Activated CD4-positive, alpha-beta T cell treated with anti-CD3 and anti-CD28 coated beads, Interleukin-2, amount 10 ng/mL, durations not matched to agents 7 days and 5 days (primary cell): ENCODE measurements at regions of chrX and their contacts with region 1.

Region 1: GRCh38 chrX:12814420-12814819 is 23.2 kb downstream of the PRPS2 start:
- DNase-seq: peak; percentile 63
- H3K4me3 Mint-ChIP-seq: no peak overlapping the region
- H3K27ac Mint-ChIP-seq: peak overlapping the region; percentile 71
- H3K4me1 Mint-ChIP-seq: peaks cover 42% of the 10 kb centered on the region
- H3K27me3 Mint-ChIP-seq: no peaks in the 10 kb centered on the region

Region 2: GRCh38 chrX:12709047-12709446 is 105.4 kb before region 1 on chrX:
- CTCF ChIA-PET with region 1: no interaction called
- POLR2A ChIA-PET with region 1: no interaction called
- DNase-seq: no peak
- H3K4me3 Mint-ChIP-seq: no peak overlapping the region
- H3K27ac Mint-ChIP-seq: no peak overlapping the region
- H3K4me1 Mint-ChIP-seq: no peaks in the 10 kb centered on the region
- H3K27me3 Mint-ChIP-seq: no peaks in the 10 kb centered on the region

Region 3: GRCh38 chrX:12887767-12888166 is 73.3 kb after region 1 on chrX:
- CTCF ChIA-PET with region 1: interaction called, 17 read pairs
- POLR2A ChIA-PET with region 1: no interaction called
- DNase-seq: no peak
- H3K4me3 Mint-ChIP-seq: no peak overlapping the region
- H3K27ac Mint-ChIP-seq: peak overlapping the region; percentile 50
- H3K4me1 Mint-ChIP-seq: peaks cover 44% of the 10 kb centered on the region
- H3K27me3 Mint-ChIP-seq: peaks cover 5% of the 10 kb centered on the region

Region 4: DNA sequence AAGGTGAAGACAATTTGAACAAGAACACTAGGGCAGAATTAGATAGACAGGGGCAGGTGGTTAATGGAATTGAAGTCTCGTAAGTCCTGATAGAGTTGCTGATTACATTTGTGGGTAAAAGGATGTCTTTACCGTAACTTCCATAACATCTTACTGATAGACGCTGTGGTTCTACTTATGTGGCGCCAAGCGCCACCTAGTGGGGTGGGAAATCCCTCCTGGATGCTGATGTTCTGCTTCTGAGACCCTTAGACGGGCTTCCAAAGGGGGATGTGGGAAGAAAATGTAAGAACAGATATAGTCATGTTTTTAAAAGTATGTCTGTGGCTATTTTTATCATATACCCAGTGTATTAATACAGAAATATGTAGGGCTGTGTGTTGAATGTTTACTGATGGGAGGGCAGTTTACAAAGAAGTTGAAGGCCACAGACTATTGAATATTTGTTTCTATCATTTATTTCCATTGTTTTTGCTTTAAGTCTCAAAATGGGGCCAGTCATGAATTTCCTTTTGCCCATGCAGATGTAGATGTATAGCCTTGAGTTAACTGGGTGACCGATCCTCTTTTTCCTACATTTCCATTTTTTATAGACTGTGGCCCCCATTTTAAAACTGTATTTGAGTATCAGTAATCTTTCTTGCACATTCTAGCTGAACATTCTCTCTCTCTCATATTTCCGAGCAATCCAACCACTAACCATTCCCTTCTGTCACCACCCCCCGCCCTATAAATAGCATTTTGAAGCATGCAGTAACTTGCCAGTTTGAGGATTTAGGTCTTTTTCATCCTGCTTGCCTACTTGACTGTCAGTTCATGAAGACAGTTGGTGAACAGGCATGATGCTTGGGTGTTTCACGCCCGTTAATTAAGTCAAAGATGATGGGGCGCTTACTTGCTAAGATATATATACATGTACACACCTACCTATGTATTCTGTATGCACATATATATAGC is 79.9 kb after region 1 on chrX:
- CTCF ChIA-PET with region 1: interaction called, 17 read pairs
- POLR2A ChIA-PET with region 1: no interaction called
- DNase-seq: peak; percentile 55
- H3K4me3 Mint-ChIP-seq: no peak overlapping the region
- H3K27ac Mint-ChIP-seq: no peak overlapping the region
- H3K4me1 Mint-ChIP-seq: peaks cover 50% of the 10 kb centered on the region
- H3K27me3 Mint-ChIP-seq: no peaks in the 10 kb centered on the region

Region 5: GRCh38 chrX:12901486-12901885 is 87.1 kb after region 1 on chrX:
- CTCF ChIA-PET with region 1: interaction called, 10 read pairs
- POLR2A ChIA-PET with region 1: no interaction called
- DNase-seq: peak; percentile 75
- H3K4me3 Mint-ChIP-seq: no peak overlapping the region
- H3K27ac Mint-ChIP-seq: no peak overlapping the region
- H3K4me1 Mint-ChIP-seq: peaks cover 7% of the 10 kb centered on the region
- H3K27me3 Mint-ChIP-seq: peaks cover 7% of the 10 kb centered on the region